GM18951 (cell line): ENCODE measurements at regions of chr4 and their contacts with region 1.

Region 1: GRCh38 chr4:52983563-52984303 is 121.6 kb downstream of the RASL11B start:
- POLR2A ChIP-seq: no peak

Region 2: GRCh38 chr4:52376132-52376704 is 607.5 kb before region 1 on chr4:
- in situ Hi-C with region 1: loop called (anchors 5 kb)
- POLR2A ChIP-seq: no peak

Region 3: GRCh38 chr4:52545099-52546069 is 438.3 kb before region 1 on chr4:
- in situ Hi-C with region 1: loop called (anchors 10 kb)
- POLR2A ChIP-seq: no peak